ENCODE measurements at regions of chr7 and their contacts with region 1.

Region 1: GRCh38 chr7:122305475-122306319 is 1.1 kb upstream of the FEZF1 start:
- DNase-seq: no peak
- ATAC-seq: peak; percentile 35
- H3K4me3 ChIP-seq: peak overlapping the region; percentile 25
- H3K27ac ChIP-seq: no peak overlapping the region
- H3K4me1 ChIP-seq: peaks cover 30% of the 10 kb centered on the region
- H3K27me3 ChIP-seq: peaks cover 97% of the 10 kb centered on the region
- CTCF ChIP-seq: no peak

Region 2: GRCh38 chr7:121244120-121244870 is 1061.4 kb before region 1 on chr7:
- intact Hi-C with region 1: loop called (anchors 10 kb)
- DNase-seq: no peak
- ATAC-seq: no peak
- H3K4me3 ChIP-seq: no peak overlapping the region
- H3K27ac ChIP-seq: no peak overlapping the region
- H3K4me1 ChIP-seq: no peaks in the 10 kb centered on the region
- H3K27me3 ChIP-seq: no peaks in the 10 kb centered on the region
- CTCF ChIP-seq: no peak